BJ (cell line): ENCODE measurements at regions of chr7 and their contacts with region 1.

Region 1: DNA sequence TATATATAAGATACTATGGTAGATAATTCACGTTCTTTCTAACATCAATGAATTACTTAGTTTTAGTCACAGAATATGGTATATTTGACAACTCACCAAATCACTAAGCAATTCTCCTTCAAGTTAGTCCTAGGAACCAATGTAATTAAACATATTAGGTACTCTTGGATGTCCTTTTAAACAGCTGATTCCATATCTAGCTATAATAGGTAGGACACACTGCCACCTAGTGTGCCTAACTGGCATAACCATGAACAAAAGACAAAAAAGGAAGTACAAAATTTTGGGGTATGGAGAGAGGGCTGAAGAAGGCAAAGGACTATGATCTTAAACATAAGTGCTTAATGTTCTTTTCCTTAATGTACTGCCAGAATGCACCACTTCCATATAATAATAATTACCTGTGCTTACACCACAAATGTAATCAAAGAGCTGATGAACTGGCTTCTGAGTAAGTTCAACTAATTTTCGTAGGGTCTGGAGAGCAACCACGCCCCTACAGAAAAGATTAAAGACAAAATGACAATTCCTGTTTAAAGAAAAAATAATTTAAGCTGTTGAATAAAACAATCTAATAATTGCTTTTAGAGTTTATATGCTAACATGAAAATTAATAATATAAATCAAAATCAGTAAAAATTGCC is 28.7 kb downstream of the PNPLA8 start:
- DNase-seq: no peak
- H3K4me3 ChIP-seq: no peak overlapping the region
- H3K27me3 ChIP-seq: no peaks in the 10 kb centered on the region
- CTCF ChIP-seq: peak; percentile 84

Region 2: DNA sequence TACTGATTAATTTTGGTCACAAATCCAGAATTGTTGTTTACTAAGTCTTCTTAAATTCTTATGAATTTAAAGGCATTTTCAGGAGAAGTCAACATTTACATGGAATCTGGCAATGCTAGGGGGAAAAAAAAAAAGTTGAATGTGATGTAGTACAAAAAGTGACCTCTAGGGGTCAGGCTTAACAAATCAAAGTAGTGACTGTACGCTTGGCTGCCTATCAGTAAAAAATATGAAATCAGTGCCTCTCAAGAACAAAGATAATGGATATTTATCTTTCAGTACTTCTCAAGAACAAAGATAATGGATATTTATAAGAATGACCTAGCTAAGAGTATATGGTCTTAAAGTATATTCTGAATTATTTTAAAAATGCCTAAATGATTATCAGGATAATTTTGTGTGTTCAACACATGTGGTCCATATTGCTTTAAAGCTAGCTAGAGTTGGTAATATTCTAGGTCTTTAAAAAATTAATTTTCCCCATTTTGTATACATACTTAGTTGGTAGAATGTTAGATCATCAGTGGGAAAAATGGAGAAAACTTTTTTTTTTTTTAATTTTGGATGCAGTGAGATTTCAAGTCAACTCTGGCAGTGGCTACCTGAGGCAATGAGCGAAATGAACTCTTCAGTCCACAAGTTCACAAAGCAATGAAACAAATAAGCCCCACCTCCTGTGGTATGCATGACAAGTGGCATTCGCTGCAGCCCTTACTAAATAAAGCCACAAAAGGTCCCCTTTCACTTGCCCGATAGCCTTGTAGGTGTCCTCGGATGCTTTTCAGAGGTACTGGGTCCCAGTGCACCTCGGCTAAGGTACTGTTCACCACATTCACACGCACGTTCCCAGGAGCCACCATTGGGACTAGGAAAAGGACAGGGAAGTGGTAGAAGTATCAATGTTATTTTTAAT is 315.9 kb before region 1 on chr7:
- CTCF ChIA-PET with region 1: interaction called, 16 read pairs
- POLR2A ChIA-PET with region 1: interaction called, 6 read pairs
- DNase-seq: peak; percentile 19
- H3K4me3 ChIP-seq: no peak overlapping the region
- H3K27me3 ChIP-seq: peaks cover 2% of the 10 kb centered on the region; the same call in 1 of the 2 replicates
- CTCF ChIP-seq: peak; percentile 64

Region 3: DNA sequence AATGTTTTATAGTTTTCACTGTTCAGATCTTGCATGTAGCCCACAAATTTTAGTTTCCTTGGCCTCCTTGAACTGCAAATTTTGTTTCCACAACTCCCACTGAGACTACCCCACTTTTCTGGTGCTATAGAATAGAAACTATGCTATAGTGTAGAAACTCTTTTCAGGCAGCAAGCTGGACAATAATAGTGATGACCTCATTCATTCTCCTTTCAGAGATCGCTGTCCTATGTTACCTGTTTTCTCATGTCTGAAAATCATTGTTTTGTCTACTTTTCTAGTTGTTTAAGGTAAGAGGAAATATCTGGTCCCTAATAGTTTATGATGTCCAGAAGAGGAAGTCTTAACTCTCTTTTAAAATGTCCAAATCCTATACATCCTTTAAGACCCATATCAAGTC is 21.6 kb before region 1 on chr7:
- CTCF ChIA-PET with region 1: interaction called, 10 read pairs
- POLR2A ChIA-PET with region 1: no interaction called
- DNase-seq: no peak
- H3K4me3 ChIP-seq: no peak overlapping the region
- H3K27me3 ChIP-seq: no peaks in the 10 kb centered on the region
- CTCF ChIP-seq: no peak

Region 4: GRCh38 chr7:108486291-108486966 is 10.8 kb before region 1 on chr7:
- CTCF ChIA-PET with region 1: interaction called, 16 read pairs
- POLR2A ChIA-PET with region 1: no interaction called
- DNase-seq: no peak
- H3K4me3 ChIP-seq: no peak overlapping the region
- H3K27me3 ChIP-seq: no peaks in the 10 kb centered on the region
- CTCF ChIP-seq: no peak

Region 5: GRCh38 chr7:108525985-108526767 is 29.0 kb after region 1 on chr7 and contains the start of gene PNPLA8:
- CTCF ChIA-PET with region 1: interaction called, 13 read pairs
- POLR2A ChIA-PET with region 1: no interaction called
- DNase-seq: peak; percentile 97
- H3K4me3 ChIP-seq: peak within 1 kb of the TSS; percentile 78
- H3K27me3 ChIP-seq: no peaks in the 10 kb centered on the region
- CTCF ChIP-seq: 0 out of 2 replicates have a peak, but pooled peaks have one; percentile 4
- polyA plus RNA-seq, gene PNPLA8: 7.8 and 19.8 TPM in 2 replicates